Right lobe of liver (tissue), 6 donors: ENCODE measurements at regions of chr3 and their contacts with region 1.

Region 1: DNA sequence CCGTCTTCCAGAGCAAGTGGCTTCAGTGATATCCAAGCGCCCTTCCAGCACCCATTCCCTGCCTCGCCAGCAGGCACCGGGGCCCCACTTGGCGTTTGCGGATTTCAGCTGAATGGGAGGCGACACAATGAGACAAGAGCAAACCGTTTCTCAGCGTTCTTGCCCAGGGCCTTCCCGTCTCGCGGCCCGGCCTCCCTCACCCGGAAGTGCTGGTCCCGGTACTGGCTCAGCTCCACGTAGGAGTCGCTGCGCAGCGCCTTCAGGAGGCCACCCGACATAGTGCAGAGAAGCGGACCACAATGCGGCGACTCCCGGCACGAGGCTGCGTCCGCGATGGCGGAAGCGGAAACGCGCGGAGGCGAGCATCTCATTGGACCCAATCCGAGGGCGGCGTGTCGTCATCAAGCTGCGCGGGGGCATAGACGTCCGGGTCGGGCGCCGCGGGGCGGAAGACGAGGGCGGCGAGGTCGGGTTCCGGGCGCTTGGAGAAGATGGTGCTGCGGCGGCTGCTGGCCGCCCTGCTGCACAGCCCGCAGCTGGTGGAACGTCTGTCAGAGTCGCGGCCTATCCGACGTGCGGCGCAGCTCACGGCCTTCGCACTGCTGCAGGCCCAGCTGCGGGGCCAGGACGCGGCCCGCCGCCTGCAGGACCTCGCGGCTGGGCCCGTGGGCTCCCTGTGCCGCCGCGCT is at the start of gene NCBP2:
- DNase-seq: peak; percentile 98
- ATAC-seq: peak; percentile 97 to 98 (median 97)
- H3K4me3 ChIP-seq: peak within 1 kb of the TSS; percentile 99 to 100 (median 100)
- H3K27ac ChIP-seq: peak within 1 kb of the TSS; percentile 77 to 78 (median 77)
- H3K4me1 ChIP-seq: peaks cover 0 to 22% (median 6%) of the 10 kb centered on the region in 4 donors
- H3K27me3 ChIP-seq: no peaks in the 10 kb centered on the region
- CTCF ChIP-seq: peak; percentile 56 to 61 (median 60)
- POLR2A ChIP-seq: peak; percentile 78
- total RNA-seq, gene NCBP2: 12.9 to 24.6 (median 19.1) TPM

Region 2: GRCh38 chr3:196867507-196868296 is 74.7 kb before region 1 on chr3 and contains the start of gene SENP5:
- intact Hi-C with region 1: loop called in 1 of 2 experiments (anchors 10 kb)
- DNase-seq: peak; percentile 94 to 95 (median 95)
- ATAC-seq: peak; percentile 99
- H3K4me3 ChIP-seq: peak within 1 kb of the TSS; percentile 95 to 98 (median 98)
- H3K27ac ChIP-seq: peak within 1 kb of the TSS; percentile 71 to 91 (median 83)
- H3K4me1 ChIP-seq: peaks cover 0 to 17% (median 0%) of the 10 kb centered on the region in 4 donors
- H3K27me3 ChIP-seq: no peaks in the 10 kb centered on the region
- CTCF ChIP-seq: no peak
- POLR2A ChIP-seq: peak; percentile 95
- total RNA-seq, gene SENP5: 13.0 to 21.9 (median 15.3) TPM